MCF 10A (cell line): ENCODE measurements at regions of chr13 and their contacts with region 1.

Region 1: DNA sequence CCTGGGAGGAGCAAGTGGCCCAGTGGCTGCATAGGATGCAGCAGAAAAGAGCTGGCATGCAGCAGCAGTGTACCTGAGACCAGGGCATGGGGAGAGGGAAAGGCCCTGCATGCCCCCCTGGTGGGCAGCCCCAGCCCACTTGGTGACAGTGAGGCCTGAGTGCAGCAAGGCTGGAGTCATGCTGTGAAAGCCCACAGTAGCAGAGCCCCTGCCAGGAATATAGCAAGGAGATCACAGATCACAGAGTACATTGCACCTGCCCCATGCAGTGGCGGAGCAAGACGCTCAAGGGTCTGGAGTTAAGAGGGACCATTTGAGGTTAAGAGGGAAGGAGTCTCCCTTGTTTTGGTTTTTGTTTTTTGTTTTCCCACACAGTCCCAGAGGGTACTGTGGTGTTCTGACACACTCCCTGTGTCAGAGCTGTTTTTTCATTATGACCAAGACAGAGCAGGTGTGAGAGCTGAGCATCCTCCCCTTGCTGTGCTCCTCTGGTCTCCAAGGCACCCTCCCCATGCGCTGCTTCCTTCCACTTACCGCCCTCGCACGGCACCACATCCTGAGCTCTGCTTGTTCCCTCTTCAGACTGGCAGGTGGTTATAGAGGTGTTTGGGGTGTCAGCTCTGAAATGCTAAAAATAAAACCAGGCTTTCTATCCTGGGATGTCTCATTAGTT is 85.0 kb upstream of the UBL3 start:
- DNase-seq: no peak
- H3K4me3 Mint-ChIP-seq: no peak overlapping the region
- H3K27ac Mint-ChIP-seq: no peak overlapping the region
- H3K4me1 Mint-ChIP-seq: no peaks in the 10 kb centered on the region
- H3K27me3 Mint-ChIP-seq: no peaks in the 10 kb centered on the region
- CTCF ChIP-seq: no peak

Region 2: GRCh38 chr13:29917650-29918049 is 17.8 kb before region 1 on chr13:
- CTCF ChIA-PET with region 1: no interaction called
- POLR2A ChIA-PET with region 1: no interaction called
- intact Hi-C with region 1: no loop called
- DNase-seq: no peak
- H3K4me3 Mint-ChIP-seq: no peak overlapping the region
- H3K27ac Mint-ChIP-seq: no peak overlapping the region
- H3K4me1 Mint-ChIP-seq: peaks cover 38% of the 10 kb centered on the region
- H3K27me3 Mint-ChIP-seq: no peaks in the 10 kb centered on the region
- CTCF ChIP-seq: no peak

Region 3: GRCh38 chr13:30551189-30551588 is 615.7 kb after region 1 on chr13:
- CTCF ChIA-PET with region 1: no interaction called
- POLR2A ChIA-PET with region 1: no interaction called
- intact Hi-C with region 1: loop called (anchors 10 kb)
- DNase-seq: peak; percentile 54
- H3K4me3 Mint-ChIP-seq: no peak overlapping the region
- H3K27ac Mint-ChIP-seq: no peak overlapping the region
- H3K4me1 Mint-ChIP-seq: no peaks in the 10 kb centered on the region
- H3K27me3 Mint-ChIP-seq: no peaks in the 10 kb centered on the region
- CTCF ChIP-seq: peak; percentile 17